ENCODE measurements at regions of chr2 and their contacts with region 1.

Region 1: DNA sequence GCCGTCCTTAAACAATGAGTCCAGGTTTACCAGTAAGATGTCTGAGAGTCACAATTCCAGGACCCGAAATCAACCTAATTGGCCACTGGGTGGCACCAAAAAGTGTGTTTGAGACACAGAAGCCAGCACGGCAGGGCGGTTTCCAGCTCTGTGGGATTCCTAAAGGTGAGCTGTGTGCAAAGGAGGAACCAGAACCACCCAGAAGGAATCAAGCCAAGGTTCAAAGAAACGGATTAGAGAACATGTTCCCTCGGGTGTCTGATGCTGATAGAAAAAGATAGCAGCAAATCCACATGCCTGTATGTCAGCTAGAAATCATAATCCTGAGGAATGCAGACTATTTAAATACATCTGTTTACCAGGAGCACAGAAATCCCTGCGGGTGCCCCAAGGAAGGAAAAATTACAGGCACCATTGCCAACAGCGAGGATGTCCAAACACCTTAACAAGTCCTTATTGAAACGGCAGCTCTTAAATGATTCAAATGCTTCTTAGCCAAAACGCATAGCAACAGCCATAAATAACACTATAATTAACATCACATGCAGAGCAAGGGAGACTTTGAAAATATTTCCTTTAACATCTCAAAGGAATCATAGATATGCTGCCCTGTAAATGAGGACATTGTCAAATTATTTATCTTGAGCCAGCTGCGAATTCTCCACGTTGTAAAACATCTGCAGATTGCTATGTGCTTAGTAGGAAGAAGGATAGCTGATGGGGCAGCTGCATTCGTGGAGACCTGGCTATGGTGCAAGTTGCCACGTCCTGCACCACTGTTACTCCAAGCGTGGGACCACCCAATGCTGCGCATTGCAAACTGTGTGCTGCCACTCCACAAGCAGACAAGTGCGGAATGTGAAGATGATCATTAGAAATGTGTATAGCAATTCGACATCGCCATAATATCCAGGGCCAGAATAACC is 318.7 kb upstream of the NCKAP5 start:
- DNase-seq: peak; percentile 71
- H3K4me3 ChIP-seq: no peak overlapping the region
- H3K27ac ChIP-seq: no peak overlapping the region
- H3K4me1 ChIP-seq: no peaks in the 10 kb centered on the region
- H3K27me3 ChIP-seq: no peaks in the 10 kb centered on the region
- CTCF ChIP-seq: peak in 3 of 4 experiments; percentile 47 to 57 (median 56)
- POLR2A ChIP-seq: no peak

Region 2: DNA sequence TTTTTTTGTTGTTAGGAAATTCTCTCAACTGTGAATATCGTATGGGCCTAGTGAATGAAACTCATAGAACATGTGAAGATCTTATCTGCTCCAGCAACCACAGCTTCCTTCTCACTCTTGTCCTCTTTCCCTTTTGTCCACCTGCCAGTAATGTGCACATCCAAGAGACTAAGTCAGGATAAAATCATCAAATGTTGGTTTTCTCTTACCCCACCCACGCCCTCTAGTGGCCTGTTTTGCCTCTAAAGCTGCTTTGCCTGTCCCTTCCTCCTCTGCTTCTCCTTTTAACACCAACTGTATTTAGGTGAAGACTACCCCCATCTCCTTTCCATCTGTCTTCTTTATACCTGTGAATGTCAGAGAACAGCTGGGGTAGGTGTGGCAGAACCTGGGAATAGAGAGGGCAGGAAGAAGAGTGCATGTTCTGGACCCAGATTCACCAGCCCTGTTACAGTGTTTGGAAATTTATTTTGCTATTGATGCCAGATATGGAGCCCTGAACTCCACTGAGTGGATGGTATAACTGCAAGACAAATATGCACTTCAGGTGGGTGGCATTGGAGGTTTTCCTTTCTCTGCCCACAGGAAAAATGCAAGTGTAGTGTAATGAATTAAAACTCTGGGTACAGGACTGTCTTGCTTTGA is 358.5 kb after region 1 on chr2:
- intact Hi-C with region 1: loop called (anchors 5 kb)
- DNase-seq: peak; percentile 76
- H3K4me3 ChIP-seq: no peak overlapping the region
- H3K27ac ChIP-seq: no peak overlapping the region
- H3K4me1 ChIP-seq: no peaks in the 10 kb centered on the region
- H3K27me3 ChIP-seq: no peaks in the 10 kb centered on the region
- CTCF ChIP-seq: peak; percentile 51 to 69 (median 64)
- POLR2A ChIP-seq: no peak

Region 3: GRCh38 chr2:134411828-134412638 is 525.0 kb after region 1 on chr2:
- intact Hi-C with region 1: loop called (anchors 5 kb)
- DNase-seq: peak; percentile 58
- H3K4me3 ChIP-seq: no peak overlapping the region
- H3K27ac ChIP-seq: no peak overlapping the region
- H3K4me1 ChIP-seq: no peaks in the 10 kb centered on the region
- H3K27me3 ChIP-seq: no peaks in the 10 kb centered on the region
- CTCF ChIP-seq: peak in 3 of 4 experiments; percentile 31 to 66 (median 63)
- POLR2A ChIP-seq: no peak